ENCODE measurements at regions of chr17 and their contacts with region 1.

Region 1: DNA sequence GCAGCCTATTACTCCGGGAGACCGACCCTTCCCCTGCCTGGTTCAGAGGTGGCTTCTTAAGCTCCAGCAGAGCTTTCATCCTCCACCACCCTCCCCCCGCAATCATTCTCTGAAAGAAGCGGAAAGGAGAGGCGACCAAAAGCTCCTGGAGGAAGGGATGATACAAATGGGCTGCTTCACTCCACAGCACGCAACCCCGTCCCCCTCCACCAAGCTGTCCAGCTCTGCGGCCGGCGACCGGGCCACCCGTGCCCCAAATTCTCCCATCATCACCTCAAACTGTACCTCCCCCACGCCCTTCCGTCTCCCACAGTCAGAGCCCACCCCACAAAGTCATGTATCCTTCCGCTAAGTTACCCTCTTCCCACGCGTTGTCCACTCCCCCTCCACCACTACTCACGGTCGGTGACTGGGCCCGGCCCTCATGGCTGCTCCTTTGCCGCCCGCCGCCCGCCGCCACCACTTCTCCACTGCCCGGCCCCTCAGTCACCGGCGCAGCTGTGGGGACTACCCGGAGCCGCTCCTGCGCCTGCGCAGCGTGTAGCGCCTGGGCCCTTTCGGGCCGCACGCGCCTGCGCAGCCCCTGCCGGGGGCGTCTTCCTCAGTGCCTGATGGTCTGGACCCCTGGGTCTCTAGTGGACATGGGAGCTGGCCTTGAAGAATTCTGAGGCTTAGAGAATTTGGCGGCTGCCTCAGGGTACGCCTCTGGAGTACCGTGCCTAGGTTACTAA is at the start of gene FAM222B:
- DNase-seq: peak; percentile 75 to 88 (median 80)
- H3K4me3 ChIP-seq: peak within 1 kb of the TSS; percentile 85
- H3K27ac ChIP-seq: peak within 1 kb of the TSS in 1 of 2 donors; percentile 62
- H3K4me1 ChIP-seq: peaks cover 2% of the 10 kb centered on the region
- H3K27me3 ChIP-seq: no peaks in the 10 kb centered on the region
- CTCF ChIP-seq: no peak
- EP300 ChIP-seq: no peak
- POLR2A ChIP-seq: peak; percentile 62
- total RNA-seq, gene FAM222B: 8.0 to 19.8 (median 17.9) TPM

Region 2: DNA sequence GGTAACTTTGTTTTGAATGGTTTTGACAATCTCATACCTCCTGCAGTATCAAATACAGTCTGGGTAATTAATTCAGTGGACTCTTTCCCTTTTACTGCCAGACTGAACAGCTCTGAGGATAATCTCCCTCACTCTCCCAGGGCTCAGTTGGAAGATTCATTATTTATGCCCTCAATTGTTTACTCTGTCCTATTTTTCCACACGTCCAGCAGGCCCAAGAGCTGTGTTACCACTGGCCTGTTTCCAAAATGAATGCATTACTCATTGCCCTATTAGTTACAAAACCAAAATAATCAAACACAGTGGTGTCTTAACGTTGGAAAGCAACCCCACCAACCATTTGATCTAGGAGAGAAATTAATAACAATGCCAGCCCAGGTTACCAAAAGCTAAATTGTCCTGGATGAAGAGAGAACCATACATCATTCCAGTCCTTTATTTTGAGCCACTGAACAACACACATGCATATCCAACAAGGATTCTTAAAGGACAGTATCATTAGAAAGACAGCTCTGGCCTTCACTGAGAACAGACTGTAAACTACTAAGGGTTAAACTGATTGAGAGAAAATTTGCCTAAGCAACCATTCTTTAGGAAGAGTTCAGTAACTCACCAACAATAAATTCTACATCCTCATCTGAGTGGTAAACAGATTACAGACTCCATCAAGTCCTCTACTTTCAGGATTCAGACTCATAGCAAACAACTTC is 34.4 kb before region 1 on chr17:
- intact Hi-C with region 1: loop called in 1 of 4 experiments (anchors 2 kb)
- DNase-seq: peak in 1 of 5 donors; percentile 46
- H3K4me3 ChIP-seq: no peak overlapping the region
- H3K27ac ChIP-seq: peak overlapping the region in 1 of 2 donors; percentile 48
- H3K4me1 ChIP-seq: peaks cover 7% of the 10 kb centered on the region
- H3K27me3 ChIP-seq: no peaks in the 10 kb centered on the region
- CTCF ChIP-seq: no peak
- EP300 ChIP-seq: no peak
- POLR2A ChIP-seq: no peak

Measured in ovary (tissue), 10 donors.